Spleen (tissue), 13 donors: ENCODE measurements at regions of chr5 and their contacts with region 1.

Region 1: DNA sequence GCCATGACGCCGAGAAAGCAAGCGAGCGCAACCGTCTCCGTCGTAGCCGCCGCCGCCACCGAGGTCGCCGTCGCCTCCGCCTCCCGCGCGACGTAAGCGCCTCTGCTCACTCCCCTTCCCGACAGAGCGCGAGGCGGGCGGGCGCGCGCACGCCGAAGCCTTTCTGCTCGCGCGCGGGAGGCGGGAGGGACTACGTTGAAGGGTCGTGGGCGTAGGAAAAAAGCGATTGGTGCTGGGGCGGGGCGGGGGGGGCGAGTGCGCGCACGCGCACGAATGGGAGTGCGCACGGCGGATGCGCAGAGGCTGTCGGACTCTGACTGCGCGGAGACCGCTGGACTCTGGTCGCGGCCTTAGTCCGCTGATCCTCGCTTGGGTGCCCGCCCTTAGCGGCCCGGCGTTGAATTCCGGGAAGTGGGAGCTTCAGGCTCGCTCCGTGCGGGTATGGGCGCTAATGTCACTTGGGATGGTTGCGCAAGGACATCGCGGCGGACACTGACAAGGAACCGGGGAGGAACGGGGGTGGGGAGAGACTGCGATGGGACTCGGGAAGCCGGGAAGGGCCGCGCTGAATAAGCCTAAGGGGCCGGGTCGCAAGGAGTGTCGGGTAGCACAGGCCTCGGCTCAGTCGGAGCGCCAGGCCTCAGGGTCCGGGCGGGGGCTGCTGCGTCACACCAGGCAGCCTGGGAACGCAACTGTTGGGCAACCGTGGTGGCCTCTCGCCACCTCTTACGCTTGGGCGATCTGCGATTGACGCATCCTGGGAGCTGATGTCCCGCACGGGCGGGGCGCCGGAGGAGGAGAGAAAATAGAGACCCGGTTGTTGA is at the start of gene CHD1:
- DNase-seq: peak; percentile 99
- H3K4me3 ChIP-seq: peak within 1 kb of the TSS; percentile 58 to 92 (median 73)
- H3K27ac ChIP-seq: peak within 1 kb of the TSS; percentile 99 to 100 (median 100)
- H3K4me1 ChIP-seq: peaks cover 35 to 80% (median 73%) of the 10 kb centered on the region in 6 donors
- H3K27me3 ChIP-seq: no peaks in the 10 kb centered on the region
- CTCF ChIP-seq: no peak
- POLR2A ChIP-seq: peak; percentile 83 to 88 (median 87)
- total RNA-seq, gene CHD1: 58.8 to 118 (median 75.8) TPM

Region 2: GRCh38 chr5:97554977-97555643 is 1374.0 kb before region 1 on chr5:
- intact Hi-C with region 1: no loop called
- DNase-seq: no peak
- H3K4me3 ChIP-seq: no peak overlapping the region
- H3K27ac ChIP-seq: no peak overlapping the region
- H3K4me1 ChIP-seq: no peaks in the 10 kb centered on the region
- H3K27me3 ChIP-seq: no peaks in the 10 kb centered on the region
- CTCF ChIP-seq: no peak
- POLR2A ChIP-seq: no peak

Region 3: DNA sequence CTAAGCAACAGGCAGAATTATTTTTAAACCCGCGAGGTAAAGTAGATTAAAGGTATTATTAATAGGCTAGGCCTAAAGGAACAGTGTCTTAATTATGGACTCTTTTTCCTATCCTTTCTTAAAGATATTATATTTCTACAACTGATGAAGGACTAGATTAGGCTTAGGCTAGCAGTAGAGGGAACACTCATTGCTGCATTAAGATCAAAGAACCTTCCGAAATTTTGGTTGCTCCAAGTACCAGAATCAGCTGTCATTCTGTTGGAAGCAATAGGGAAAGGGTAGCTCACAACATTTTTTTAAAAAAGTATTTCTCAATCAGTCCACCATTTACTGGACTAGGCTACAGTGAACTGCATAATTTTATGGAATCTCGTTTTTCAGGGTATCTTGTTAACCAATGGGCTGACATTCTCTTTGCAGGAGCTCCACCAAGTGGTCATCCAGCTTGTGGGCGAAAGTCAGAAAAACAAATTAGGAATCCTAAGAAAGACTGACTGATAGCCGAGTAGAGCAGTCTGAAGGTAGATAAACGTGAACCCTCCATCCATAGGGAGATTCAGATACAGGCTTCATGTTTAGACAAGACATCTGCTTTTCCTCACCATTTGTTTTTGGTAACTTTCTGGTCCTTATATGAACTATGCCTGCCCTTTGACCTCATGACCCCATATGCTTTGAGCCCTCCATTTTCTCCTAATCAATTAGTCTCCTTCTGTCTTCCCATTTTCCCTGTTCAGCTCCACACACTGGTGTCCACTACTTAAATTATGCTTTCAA is 103.3 kb after region 1 on chr5:
- intact Hi-C with region 1: loop called (anchors 5 kb)
- DNase-seq: no peak
- H3K4me3 ChIP-seq: peak overlapping the region in 7 of 8 donors; percentile 0 to 61 (median 31)
- H3K27ac ChIP-seq: peak overlapping the region; percentile 74 to 87 (median 82)
- H3K4me1 ChIP-seq: peaks cover 23 to 75% (median 48%) of the 10 kb centered on the region in 6 donors
- H3K27me3 ChIP-seq: no peaks in the 10 kb centered on the region
- CTCF ChIP-seq: peak; percentile 34 to 80 (median 67)
- POLR2A ChIP-seq: no peak